ENCODE measurements at regions of chr1 and their contacts with region 1.

Region 1: DNA sequence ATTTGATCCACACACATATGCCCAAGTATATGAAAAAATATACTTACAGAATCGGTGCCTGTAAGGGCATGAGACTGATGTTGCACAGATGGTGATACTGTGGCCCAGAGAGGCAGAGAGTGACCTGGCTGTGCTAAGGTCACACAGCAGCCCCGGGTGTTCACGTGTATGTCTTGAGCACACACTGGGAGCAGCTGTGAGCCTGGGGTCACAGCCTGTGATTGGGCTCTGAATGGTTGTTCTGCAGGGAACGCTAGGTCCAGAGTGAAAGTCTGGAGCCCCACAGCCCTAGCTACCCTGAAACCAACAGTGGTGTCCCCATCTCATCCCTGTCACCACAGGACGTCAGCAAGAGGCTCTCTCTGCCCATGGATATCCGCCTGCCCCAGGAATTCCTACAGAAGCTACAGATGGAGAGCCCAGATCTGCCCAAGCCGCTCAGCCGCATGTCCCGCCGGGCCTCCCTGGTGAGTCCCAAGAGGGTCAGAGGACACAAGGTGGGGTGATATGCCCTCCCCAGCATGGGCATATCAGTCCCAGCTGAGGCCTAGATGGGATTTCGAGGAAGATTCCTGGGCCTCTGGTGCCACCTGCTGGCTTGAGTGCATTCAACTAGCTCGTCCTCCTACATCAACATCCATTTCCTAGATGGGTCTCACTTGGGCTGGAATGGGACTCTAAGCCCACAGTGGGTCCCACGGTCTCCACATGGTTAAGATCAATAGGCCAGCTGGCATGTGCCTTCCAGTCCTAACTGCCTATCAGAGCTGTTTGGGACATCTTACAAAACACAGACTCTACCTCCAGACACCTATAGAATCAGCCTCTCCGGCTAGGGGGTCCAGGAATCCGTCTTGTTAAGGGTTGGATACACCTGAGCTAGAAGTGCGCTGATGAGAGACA is 19.7 kb downstream of the CDK18 start:
- DNase-seq: peak; percentile 84
- H3K4me3 ChIP-seq: no peak overlapping the region
- H3K27ac ChIP-seq: no peak overlapping the region
- H3K4me1 ChIP-seq: peaks cover 24% of the 10 kb centered on the region
- H3K27me3 ChIP-seq: no peaks in the 10 kb centered on the region
- CTCF ChIP-seq: peak; percentile 87

Region 2: GRCh38 chr1:205335643-205336091 is 188.5 kb before region 1 on chr1:
- CTCF ChIA-PET with region 1: interaction called, 4 read pairs
- POLR2A ChIA-PET with region 1: no interaction called
- intact Hi-C with region 1: loop called (anchors 1 kb)
- DNase-seq: peak; percentile 84
- H3K4me3 ChIP-seq: no peak overlapping the region
- H3K27ac ChIP-seq: no peak overlapping the region
- H3K4me1 ChIP-seq: no peaks in the 10 kb centered on the region
- H3K27me3 ChIP-seq: no peaks in the 10 kb centered on the region
- CTCF ChIP-seq: peak; percentile 99

Region 3: DNA sequence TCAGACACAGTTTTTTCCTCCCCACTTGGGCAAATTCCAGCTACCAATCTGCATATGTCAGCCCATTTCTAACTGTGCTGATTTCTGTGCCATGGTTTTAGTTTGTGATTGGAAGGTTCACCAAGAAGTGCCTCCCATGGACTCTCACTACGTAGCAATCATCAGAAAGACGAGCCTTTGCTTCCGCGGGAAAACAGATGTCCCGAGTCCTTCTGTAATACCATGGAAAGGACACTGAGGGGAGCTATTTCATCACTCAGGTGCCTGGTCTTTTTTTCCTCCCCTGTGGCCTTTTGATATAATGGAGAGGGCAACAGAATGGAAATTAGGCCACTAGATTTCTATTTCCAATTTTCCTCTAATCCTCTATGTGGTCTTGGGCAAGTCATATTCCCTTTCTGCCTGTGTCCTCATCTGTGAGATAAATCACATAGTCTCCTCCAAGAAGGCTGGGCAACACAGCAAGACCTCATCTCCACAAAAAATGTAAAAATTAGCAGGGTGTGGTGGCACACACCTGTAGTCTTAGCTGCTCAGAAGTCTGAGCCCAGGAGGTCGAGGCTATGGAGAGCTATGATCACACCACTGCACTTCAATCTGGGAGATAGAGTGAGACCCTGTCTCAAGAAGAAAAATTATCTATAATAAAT is 127.0 kb before region 1 on chr1:
- CTCF ChIA-PET with region 1: interaction called, 24 read pairs
- POLR2A ChIA-PET with region 1: no interaction called
- intact Hi-C with region 1: loop called (anchors 1 kb)
- DNase-seq: peak; percentile 88
- H3K4me3 ChIP-seq: no peak overlapping the region
- H3K27ac ChIP-seq: no peak overlapping the region
- H3K4me1 ChIP-seq: peaks cover 20% of the 10 kb centered on the region
- H3K27me3 ChIP-seq: no peaks in the 10 kb centered on the region
- CTCF ChIP-seq: peak; percentile 87

Region 4: GRCh38 chr1:205485338-205486228 is 38.6 kb before region 1 on chr1:
- CTCF ChIA-PET with region 1: interaction called, 93 read pairs
- POLR2A ChIA-PET with region 1: interaction called, 3 read pairs
- intact Hi-C with region 1: loop called (anchors 1 kb)
- DNase-seq: peak; percentile 84
- H3K4me3 ChIP-seq: no peak overlapping the region
- H3K27ac ChIP-seq: no peak overlapping the region
- H3K4me1 ChIP-seq: no peaks in the 10 kb centered on the region
- H3K27me3 ChIP-seq: no peaks in the 10 kb centered on the region
- CTCF ChIP-seq: peak; percentile 96